ENCODE measurements at regions of chr14 and their contacts with region 1.

Region 1: DNA sequence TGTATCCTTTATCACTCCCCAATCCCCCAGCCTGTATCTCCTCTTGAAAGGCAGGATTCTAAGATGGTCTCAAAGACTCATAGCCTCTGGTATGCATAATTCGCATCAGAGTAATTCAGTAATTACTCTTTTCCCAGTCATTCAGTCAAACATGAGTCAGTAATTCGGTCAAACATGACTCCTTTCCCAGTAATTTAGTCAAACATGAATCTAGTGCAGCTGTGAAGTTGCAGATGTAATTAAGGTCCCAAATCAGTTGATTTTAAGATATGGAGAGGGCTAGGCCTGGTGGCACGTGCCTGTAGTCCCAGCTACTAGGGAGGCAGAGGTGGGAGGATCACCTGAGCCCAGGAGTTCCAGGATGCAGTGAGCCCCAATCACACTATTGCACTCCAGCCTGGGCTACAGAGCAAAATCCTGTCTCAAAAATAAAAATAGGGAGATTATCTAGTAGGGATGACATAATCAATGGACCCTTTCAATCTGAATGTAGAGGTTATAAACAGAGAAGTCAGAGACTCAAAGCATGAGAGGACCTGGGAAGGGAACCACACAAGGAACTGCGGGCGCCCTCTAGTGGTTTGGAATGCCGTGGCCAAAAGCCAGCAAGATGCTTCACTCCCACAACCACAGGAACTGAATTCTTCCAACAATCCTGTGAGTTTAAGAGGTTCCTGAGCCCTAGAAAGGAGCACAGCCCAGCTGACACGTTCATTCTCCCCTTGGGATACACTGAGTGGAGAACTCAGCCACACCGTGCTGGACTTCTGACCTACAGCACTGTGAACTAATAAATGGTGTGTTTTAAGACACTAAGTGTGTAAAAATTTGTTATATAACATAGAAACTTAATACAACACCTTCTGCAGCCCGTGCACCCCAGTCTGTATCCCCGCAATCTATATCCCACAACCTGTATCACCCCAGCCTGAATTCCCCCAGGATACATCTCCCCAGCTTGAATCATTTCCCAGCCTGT is 14.3 kb upstream of the ARMH4 start:
- DNase-seq: peak; percentile 79 to 97 (median 92)
- H3K4me3 ChIP-seq: no peak overlapping the region
- H3K27ac ChIP-seq: no peak overlapping the region
- H3K4me1 ChIP-seq: peaks cover 5 to 8% of the 10 kb centered on the region in 2 donors
- H3K27me3 ChIP-seq: no peaks in the 10 kb centered on the region
- CTCF ChIP-seq: peak; percentile 70 to 93 (median 77)
- POLR2A ChIP-seq: no peak

Region 2: GRCh38 chr14:58107947-58108552 is 58.2 kb before region 1 on chr14:
- intact Hi-C with region 1: loop called (anchors 5 to 10 kb)
- DNase-seq: peak; percentile 39 to 78 (median 58)
- H3K4me3 ChIP-seq: no peak overlapping the region
- H3K27ac ChIP-seq: no peak overlapping the region
- H3K4me1 ChIP-seq: no peaks in the 10 kb centered on the region
- H3K27me3 ChIP-seq: no peaks in the 10 kb centered on the region
- CTCF ChIP-seq: peak; percentile 72 to 84 (median 83)
- POLR2A ChIP-seq: no peak

Measured in adrenal gland (tissue), 19 donors.